MCF 10A (cell line): ENCODE measurements at regions of chr15 and their contacts with region 1.

Region 1: GRCh38 chr15:56028430-56028829 is 35.0 kb upstream of the NEDD4 start:
- DNase-seq: no peak
- H3K4me3 Mint-ChIP-seq: no peak overlapping the region
- H3K27ac Mint-ChIP-seq: peak overlapping the region; percentile 57
- H3K4me1 Mint-ChIP-seq: peaks cover 8% of the 10 kb centered on the region
- H3K27me3 Mint-ChIP-seq: no peaks in the 10 kb centered on the region
- CTCF ChIP-seq: no peak

Region 2: DNA sequence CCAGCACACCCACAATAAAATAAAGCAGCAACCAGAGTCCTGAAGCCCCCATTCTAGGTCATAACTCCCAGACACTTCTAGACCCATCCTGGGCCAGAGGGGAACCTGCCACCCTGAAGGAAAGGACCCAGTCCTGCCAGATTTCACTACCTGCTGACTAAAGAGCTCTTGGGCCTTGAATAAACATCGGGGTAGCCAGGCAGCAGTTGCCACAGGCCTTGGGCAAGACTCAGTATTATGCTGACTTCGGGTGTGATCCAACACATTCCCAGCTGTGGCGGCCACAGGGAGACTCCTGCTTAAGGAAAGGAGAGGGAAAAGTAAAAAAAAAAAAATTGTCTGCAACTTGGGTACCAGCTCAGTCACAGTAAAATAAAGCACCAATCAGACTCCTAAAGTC is 58.9 kb before region 1 on chr15:
- CTCF ChIA-PET with region 1: no interaction called
- POLR2A ChIA-PET with region 1: no interaction called
- intact Hi-C with region 1: no loop called
- DNase-seq: peak; percentile 46
- H3K4me3 Mint-ChIP-seq: no peak overlapping the region
- H3K27ac Mint-ChIP-seq: peak overlapping the region; percentile 82
- H3K4me1 Mint-ChIP-seq: peaks cover 14% of the 10 kb centered on the region
- H3K27me3 Mint-ChIP-seq: no peaks in the 10 kb centered on the region
- CTCF ChIP-seq: no peak

Region 3: GRCh38 chr15:56017920-56018319 is 10.5 kb before region 1 on chr15:
- CTCF ChIA-PET with region 1: interaction called, 12 read pairs
- POLR2A ChIA-PET with region 1: interaction called, 3 read pairs
- intact Hi-C with region 1: no loop called
- DNase-seq: no peak
- H3K4me3 Mint-ChIP-seq: no peak overlapping the region
- H3K27ac Mint-ChIP-seq: peak overlapping the region; percentile 3
- H3K4me1 Mint-ChIP-seq: peaks cover 18% of the 10 kb centered on the region
- H3K27me3 Mint-ChIP-seq: no peaks in the 10 kb centered on the region
- CTCF ChIP-seq: no peak

Region 4: GRCh38 chr15:56040081-56041035 is 11.9 kb after region 1 on chr15:
- CTCF ChIA-PET with region 1: no interaction called
- POLR2A ChIA-PET with region 1: interaction called, 23 read pairs
- intact Hi-C with region 1: no loop called
- DNase-seq: peak; percentile 96
- H3K4me3 Mint-ChIP-seq: peak overlapping the region; percentile 42
- H3K27ac Mint-ChIP-seq: peak overlapping the region; percentile 86
- H3K4me1 Mint-ChIP-seq: peaks cover 34% of the 10 kb centered on the region
- H3K27me3 Mint-ChIP-seq: no peaks in the 10 kb centered on the region
- CTCF ChIP-seq: no peak